Caco-2 (cell line): ENCODE measurements at regions of chr17 and their contacts with region 1.

Region 1: DNA sequence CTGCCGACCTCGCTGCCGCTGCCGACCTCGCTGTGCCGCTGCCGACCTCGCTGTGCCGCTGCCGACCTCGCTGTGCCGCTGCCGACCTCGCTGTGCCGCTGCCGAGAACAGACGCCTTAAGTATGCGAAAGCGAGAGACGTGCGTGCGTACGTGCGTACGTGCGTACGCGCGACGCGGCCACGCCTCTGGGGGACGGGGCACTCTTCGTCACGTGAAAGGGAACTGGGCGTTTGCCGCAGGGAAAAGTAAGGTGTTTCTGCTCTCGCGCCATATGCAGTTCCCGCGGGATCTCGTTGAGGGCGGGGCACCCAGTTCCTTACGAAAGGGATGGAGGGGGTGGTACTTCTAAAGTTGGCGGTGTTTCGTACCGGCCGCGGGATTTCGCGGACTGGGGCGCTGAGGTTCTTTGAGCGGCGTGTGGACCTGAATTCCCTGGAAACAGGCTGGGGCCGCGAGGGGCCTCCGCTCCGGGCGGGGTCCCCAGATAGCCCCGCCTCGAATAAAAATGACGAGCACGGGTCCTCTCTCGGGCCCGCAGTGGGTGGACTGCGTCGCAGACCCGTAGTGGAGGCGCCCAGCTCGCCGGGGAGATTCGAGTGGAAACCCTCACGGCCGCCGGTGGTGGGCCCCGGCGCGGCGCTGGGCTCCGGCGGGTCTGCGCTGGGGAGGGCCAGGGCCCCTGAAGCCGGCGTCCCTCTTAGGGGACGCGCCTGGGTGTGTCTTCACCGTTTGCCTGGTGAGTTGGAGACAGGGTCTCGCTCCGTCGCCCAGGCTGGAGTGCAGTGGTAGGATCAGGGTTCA is at the start of gene EIF4A3:
- DNase-seq: peak; percentile 99
- H3K4me3 ChIP-seq: peak within 1 kb of the TSS; percentile 99
- H3K4me3 Mint-ChIP-seq: peak within 1 kb of the TSS; percentile 81
- H3K27ac Mint-ChIP-seq: peak within 1 kb of the TSS; percentile 55
- H3K4me1 ChIP-seq: peaks cover 10% of the 10 kb centered on the region
- H3K4me1 Mint-ChIP-seq: peaks cover 11% of the 10 kb centered on the region
- H3K27me3 ChIP-seq: no peaks in the 10 kb centered on the region
- H3K27me3 Mint-ChIP-seq: no peaks in the 10 kb centered on the region
- CTCF ChIP-seq: no peak
- total RNA-seq, gene EIF4A3: 190 and 192 TPM in 2 replicates

Region 2: DNA sequence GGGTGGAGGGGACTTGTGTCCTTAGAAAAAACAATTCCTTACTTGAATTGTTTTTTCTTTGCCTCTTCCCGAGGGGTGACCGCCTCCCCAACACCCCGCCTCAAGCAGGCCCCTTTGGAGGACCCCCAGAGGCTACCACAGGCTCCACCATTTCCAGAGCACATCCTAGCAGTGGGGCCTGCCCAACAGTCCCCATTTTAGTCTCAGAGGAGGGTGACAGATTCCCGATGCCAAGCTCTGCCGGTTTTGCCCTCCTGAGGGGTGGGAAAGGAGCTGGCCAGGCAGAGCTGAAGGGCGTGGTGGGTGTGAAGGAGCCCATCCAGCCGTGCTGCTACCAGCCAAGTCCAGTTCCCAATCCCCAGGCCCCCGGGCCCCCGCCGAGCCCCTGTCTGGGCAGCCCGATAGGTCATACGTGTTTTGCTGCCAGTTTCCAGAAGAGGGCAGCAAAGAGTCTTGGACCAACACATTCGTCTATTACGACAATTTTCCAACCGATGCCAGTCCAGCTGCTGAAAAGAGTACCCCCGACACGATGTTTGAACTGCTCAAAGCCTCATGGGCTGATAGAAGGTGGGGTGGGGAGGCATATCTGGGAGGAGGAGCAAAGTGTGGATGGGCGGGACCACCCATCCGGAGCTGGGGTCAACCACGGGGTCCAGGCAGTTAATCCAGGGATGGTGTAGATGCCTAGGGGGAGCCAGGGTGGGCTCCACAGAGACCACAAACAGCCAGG is 64.7 kb before region 1 on chr17:
- CTCF ChIA-PET with region 1: no interaction called
- POLR2A ChIA-PET with region 1: no interaction called
- intact Hi-C with region 1: no loop called
- DNase-seq: peak; percentile 74 to 82
- H3K4me3 ChIP-seq: no peak overlapping the region
- H3K4me3 Mint-ChIP-seq: no peak overlapping the region
- H3K27ac Mint-ChIP-seq: no peak overlapping the region
- H3K4me1 ChIP-seq: no peaks in the 10 kb centered on the region
- H3K4me1 Mint-ChIP-seq: peaks cover 9% of the 10 kb centered on the region
- H3K27me3 ChIP-seq: no peaks in the 10 kb centered on the region
- H3K27me3 Mint-ChIP-seq: peaks cover 3% of the 10 kb centered on the region
- CTCF ChIP-seq: peak; percentile 80 to 89

Region 3: GRCh38 chr17:80101011-80101945 is 46.0 kb before region 1 on chr17 and contains the start of gene GAA:
- CTCF ChIA-PET with region 1: interaction called, 16 read pairs
- POLR2A ChIA-PET with region 1: interaction called, 15 read pairs
- intact Hi-C with region 1: no loop called
- DNase-seq: peak; percentile 80 to 95
- H3K4me3 ChIP-seq: peak within 1 kb of the TSS; percentile 97
- H3K4me3 Mint-ChIP-seq: peak within 1 kb of the TSS; percentile 86
- H3K27ac Mint-ChIP-seq: peak within 1 kb of the TSS; percentile 81
- H3K4me1 ChIP-seq: peaks cover 9% of the 10 kb centered on the region
- H3K4me1 Mint-ChIP-seq: peaks cover 6% of the 10 kb centered on the region
- H3K27me3 ChIP-seq: no peaks in the 10 kb centered on the region; the same call in 1 of the 2 replicates
- H3K27me3 Mint-ChIP-seq: no peaks in the 10 kb centered on the region
- CTCF ChIP-seq: peak; percentile 64 to 94
- total RNA-seq, gene GAA: 42.4 and 44.6 TPM in 2 replicates

Region 4: GRCh38 chr17:80169784-80170500 is 22.7 kb after region 1 on chr17 and contains the start of gene CARD14:
- CTCF ChIA-PET with region 1: no interaction called
- POLR2A ChIA-PET with region 1: interaction called, 5 read pairs
- intact Hi-C with region 1: loop called (anchors 1 kb)
- DNase-seq: peak; percentile 75 to 79
- H3K4me3 ChIP-seq: no peak within 1 kb of the TSS
- H3K4me3 Mint-ChIP-seq: peak within 1 kb of the TSS; percentile 63
- H3K27ac Mint-ChIP-seq: peak within 1 kb of the TSS; percentile 24
- H3K4me1 ChIP-seq: peaks cover 13% of the 10 kb centered on the region
- H3K4me1 Mint-ChIP-seq: peaks cover 31% of the 10 kb centered on the region
- H3K27me3 ChIP-seq: no peaks in the 10 kb centered on the region
- H3K27me3 Mint-ChIP-seq: no peaks in the 10 kb centered on the region
- CTCF ChIP-seq: no peak
- total RNA-seq, gene CARD14: 1.3 and 1.8 TPM in 2 replicates

Region 5: DNA sequence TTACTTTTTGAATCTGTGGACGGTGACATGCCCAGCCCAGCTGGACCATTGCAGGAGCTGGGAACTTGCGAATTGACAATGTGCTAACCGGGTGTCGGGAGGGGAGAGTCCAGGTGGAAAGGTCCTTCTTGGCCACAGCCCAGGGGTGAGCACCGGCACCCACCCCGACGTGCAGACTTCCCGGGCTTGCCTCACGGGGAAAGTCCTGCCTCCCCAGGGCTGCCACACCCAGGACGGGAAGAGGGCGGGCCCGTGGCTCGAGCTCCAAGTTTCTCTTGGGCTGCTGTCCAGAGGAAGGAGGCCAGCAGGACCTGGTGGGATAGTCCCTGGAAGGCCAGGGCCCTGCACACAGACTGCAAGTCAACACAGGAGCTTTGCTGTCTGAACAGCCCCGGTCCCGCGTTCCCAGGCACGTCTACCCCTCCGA is 40.3 kb after region 1 on chr17:
- CTCF ChIA-PET with region 1: no interaction called
- POLR2A ChIA-PET with region 1: no interaction called
- intact Hi-C with region 1: no loop called
- DNase-seq: no peak
- H3K4me3 ChIP-seq: no peak overlapping the region
- H3K4me3 Mint-ChIP-seq: no peak overlapping the region
- H3K27ac Mint-ChIP-seq: no peak overlapping the region
- H3K4me1 ChIP-seq: no peaks in the 10 kb centered on the region
- H3K4me1 Mint-ChIP-seq: no peaks in the 10 kb centered on the region
- H3K27me3 ChIP-seq: no peaks in the 10 kb centered on the region
- H3K27me3 Mint-ChIP-seq: no peaks in the 10 kb centered on the region
- CTCF ChIP-seq: no peak

Region 6: GRCh38 chr17:80219763-80220725 is 72.8 kb after region 1 on chr17 and contains the starts of genes SGSH and SLC26A11:
- CTCF ChIA-PET with region 1: no interaction called
- POLR2A ChIA-PET with region 1: interaction called, 8 read pairs
- intact Hi-C with region 1: loop called (anchors 5 kb)
- DNase-seq: peak; percentile 86 to 89
- H3K4me3 ChIP-seq: peak within 1 kb of the TSS; percentile 82
- H3K4me3 Mint-ChIP-seq: peak within 1 kb of the TSS; percentile 96
- H3K27ac Mint-ChIP-seq: peak within 1 kb of the TSS; percentile 88
- H3K4me1 ChIP-seq: peaks cover 6% of the 10 kb centered on the region; the same call in 1 of the 2 replicates
- H3K4me1 Mint-ChIP-seq: peaks cover 8% of the 10 kb centered on the region
- H3K27me3 ChIP-seq: no peaks in the 10 kb centered on the region
- H3K27me3 Mint-ChIP-seq: no peaks in the 10 kb centered on the region
- CTCF ChIP-seq: peak; percentile 2 to 15
- total RNA-seq, gene SGSH: 39.5 and 42.8 TPM in 2 replicates
- total RNA-seq, gene SLC26A11: 37.1 and 46.0 TPM in 2 replicates

Region 7: DNA sequence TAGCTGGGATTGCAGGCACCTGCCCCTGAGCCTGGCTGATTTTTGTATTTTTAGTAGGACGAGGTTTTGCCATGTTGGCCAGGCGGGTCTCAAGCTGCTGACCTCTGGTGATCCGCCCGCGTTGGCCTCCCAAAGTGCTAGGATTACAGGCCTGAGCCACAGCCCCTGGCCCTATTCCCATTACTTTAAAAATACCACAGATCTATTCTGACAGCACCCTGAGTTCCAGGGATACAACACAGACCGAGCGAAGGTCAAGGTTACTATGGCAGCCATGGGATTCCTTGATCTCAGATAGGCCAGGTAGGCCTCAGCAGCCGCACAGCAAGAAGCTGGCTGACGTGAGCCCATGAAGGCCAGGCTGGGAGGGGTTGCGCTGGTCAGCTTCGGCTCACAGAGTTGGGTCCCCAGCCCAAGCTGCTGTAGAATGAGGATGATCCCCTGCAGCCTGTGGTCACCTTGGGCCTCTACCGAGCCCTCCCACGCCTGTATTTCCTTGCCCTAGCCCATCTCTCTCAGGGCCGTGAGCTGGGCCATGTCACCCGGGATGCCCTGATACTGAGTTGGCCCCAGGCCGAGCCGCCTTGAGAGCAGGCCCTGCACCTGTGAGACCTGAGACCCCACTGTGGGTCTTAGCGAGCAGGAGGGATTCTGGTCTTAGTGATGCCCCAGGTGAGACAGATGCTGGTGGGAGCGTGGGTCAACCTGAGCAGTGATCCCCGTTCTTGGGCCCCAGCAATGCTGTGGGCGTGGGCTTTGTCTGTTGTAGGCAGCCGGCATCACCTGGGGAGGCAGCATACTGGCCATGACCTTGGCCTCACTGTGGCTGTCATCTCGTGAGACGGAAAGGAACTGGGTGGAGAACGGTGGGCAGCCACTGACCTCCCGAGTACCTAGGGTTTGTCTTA is 96.5 kb after region 1 on chr17:
- CTCF ChIA-PET with region 1: no interaction called
- POLR2A ChIA-PET with region 1: no interaction called
- intact Hi-C with region 1: no loop called
- DNase-seq: no peak
- H3K4me3 ChIP-seq: no peak overlapping the region
- H3K4me3 Mint-ChIP-seq: no peak overlapping the region
- H3K27ac Mint-ChIP-seq: no peak overlapping the region
- H3K4me1 ChIP-seq: no peaks in the 10 kb centered on the region
- H3K4me1 Mint-ChIP-seq: no peaks in the 10 kb centered on the region
- H3K27me3 ChIP-seq: no peaks in the 10 kb centered on the region
- H3K27me3 Mint-ChIP-seq: no peaks in the 10 kb centered on the region
- CTCF ChIP-seq: no peak